SK-N-SH (cell line): ENCODE measurements at regions of chr10 and their contacts with region 1.

Region 1: DNA sequence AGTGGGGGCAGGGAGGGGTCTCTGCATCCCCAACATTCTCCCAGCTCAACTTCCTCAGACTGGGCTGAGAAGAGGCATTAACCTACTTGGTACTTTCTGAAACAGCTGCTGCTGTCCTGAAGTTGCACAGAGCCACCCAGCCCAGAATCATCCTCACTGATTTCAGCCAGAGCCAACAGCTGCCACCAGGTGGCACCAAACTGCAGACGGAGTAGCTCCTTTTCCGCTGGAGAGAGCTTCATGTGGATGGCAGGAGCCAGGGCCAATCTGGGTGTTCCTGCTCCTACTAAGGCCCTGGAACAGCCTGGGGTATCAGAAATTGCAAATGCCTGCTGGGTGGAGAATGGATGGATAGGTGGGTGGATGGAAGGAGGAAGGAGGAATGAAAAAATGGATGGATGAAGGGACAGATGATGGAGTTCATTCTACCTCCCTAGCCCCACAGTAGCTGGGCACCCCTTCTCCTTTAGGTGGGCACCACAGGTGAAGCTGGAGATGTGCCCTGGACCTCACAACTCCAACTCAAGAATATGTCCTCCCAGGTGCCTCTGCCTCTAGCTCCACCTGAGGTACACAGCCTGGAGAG is 11.8 kb upstream of the DRGX start:
- DNase-seq: peak; percentile 83
- H3K4me3 ChIP-seq: no peak overlapping the region; a peak in 1 of 4 replicates
- H3K27ac ChIP-seq: no peak overlapping the region
- H3K4me1 ChIP-seq: peaks cover 0 to 32% of the 10 kb centered on the region in 2 experiments; a peak in 2 of 4 replicates
- H3K27me3 ChIP-seq: peaks cover 21% of the 10 kb centered on the region; the same call in 1 of the 2 replicates
- CTCF ChIP-seq: peak; percentile 89
- EP300 ChIP-seq: no peak
- RAD21 ChIP-seq: peak; percentile 92

Region 2: GRCh38 chr10:48981310-48981907 is 426.2 kb before region 1 on chr10:
- CTCF ChIA-PET with region 1: interaction called, 10 read pairs
- POLR2A ChIA-PET with region 1: no interaction called
- DNase-seq: peak; percentile 85
- H3K4me3 ChIP-seq: peak overlapping the region in 1 of 2 experiments; percentile 42; a peak in 1 of 4 replicates
- H3K27ac ChIP-seq: no peak overlapping the region
- H3K4me1 ChIP-seq: no peaks in the 10 kb centered on the region; a peak in 1 of 4 replicates
- H3K27me3 ChIP-seq: no peaks in the 10 kb centered on the region
- CTCF ChIP-seq: peak; percentile 57
- EP300 ChIP-seq: no peak
- RAD21 ChIP-seq: peak; percentile 89

Region 3: GRCh38 chr10:49353026-49353894 is 54.4 kb before region 1 on chr10:
- CTCF ChIA-PET with region 1: no interaction called
- POLR2A ChIA-PET with region 1: no interaction called
- DNase-seq: no peak
- H3K4me3 ChIP-seq: no peak overlapping the region
- H3K27ac ChIP-seq: no peak overlapping the region
- H3K4me1 ChIP-seq: no peaks in the 10 kb centered on the region; a peak in 1 of 4 replicates
- H3K27me3 ChIP-seq: no peaks in the 10 kb centered on the region
- CTCF ChIP-seq: no peak
- EP300 ChIP-seq: no peak
- RAD21 ChIP-seq: no peak

Region 4: DNA sequence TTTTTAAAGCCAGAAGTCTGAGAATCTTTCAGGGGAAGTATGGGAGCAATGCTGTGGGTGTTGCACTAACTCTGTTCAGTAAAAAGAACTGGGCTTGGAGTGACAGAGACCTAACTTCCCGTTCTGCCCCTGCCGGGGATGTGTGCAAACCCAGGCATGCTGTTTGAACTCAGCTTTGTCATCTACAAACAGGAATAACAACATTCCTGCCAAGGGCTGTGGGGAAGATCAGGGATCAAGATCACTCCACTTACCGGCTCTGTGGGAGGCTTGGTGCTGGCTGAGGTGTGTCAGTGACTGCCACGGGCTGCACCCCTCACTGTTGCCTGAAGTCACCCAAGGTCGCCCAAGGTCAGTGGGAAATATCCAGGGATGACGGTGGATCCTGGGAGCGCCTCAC is 11.4 kb after region 1 on chr10:
- CTCF ChIA-PET with region 1: interaction called, 29 read pairs
- POLR2A ChIA-PET with region 1: no interaction called
- DNase-seq: no peak
- H3K4me3 ChIP-seq: no peak overlapping the region
- H3K27ac ChIP-seq: no peak overlapping the region
- H3K4me1 ChIP-seq: no peaks in the 10 kb centered on the region
- H3K27me3 ChIP-seq: no peaks in the 10 kb centered on the region; the same call in 1 of the 2 replicates
- CTCF ChIP-seq: no peak
- EP300 ChIP-seq: no peak
- RAD21 ChIP-seq: no peak

Region 5: GRCh38 chr10:49478819-49479218 is 71.2 kb after region 1 on chr10:
- CTCF ChIA-PET with region 1: interaction called, 13 read pairs
- POLR2A ChIA-PET with region 1: no interaction called
- DNase-seq: no peak
- H3K4me3 ChIP-seq: no peak overlapping the region
- H3K27ac ChIP-seq: no peak overlapping the region
- H3K4me1 ChIP-seq: no peaks in the 10 kb centered on the region; a peak in 2 of 4 replicates
- H3K27me3 ChIP-seq: no peaks in the 10 kb centered on the region
- CTCF ChIP-seq: no peak
- EP300 ChIP-seq: no peak
- RAD21 ChIP-seq: no peak

Region 6: GRCh38 chr10:49488056-49488717 is 80.5 kb after region 1 on chr10:
- CTCF ChIA-PET with region 1: interaction called, 12 read pairs
- POLR2A ChIA-PET with region 1: no interaction called
- DNase-seq: peak; percentile 70
- H3K4me3 ChIP-seq: no peak overlapping the region
- H3K27ac ChIP-seq: peak overlapping the region in 1 of 2 experiments; percentile 86; a peak in 2 of 4 replicates
- H3K4me1 ChIP-seq: peaks cover 11% of the 10 kb centered on the region in 2 experiments; a peak in 3 of 4 replicates
- H3K27me3 ChIP-seq: no peaks in the 10 kb centered on the region
- CTCF ChIP-seq: no peak
- EP300 ChIP-seq: peak in 1 of 2 experiments; percentile 76; a peak in 1 of 4 replicates
- RAD21 ChIP-seq: no peak

Region 7: DNA sequence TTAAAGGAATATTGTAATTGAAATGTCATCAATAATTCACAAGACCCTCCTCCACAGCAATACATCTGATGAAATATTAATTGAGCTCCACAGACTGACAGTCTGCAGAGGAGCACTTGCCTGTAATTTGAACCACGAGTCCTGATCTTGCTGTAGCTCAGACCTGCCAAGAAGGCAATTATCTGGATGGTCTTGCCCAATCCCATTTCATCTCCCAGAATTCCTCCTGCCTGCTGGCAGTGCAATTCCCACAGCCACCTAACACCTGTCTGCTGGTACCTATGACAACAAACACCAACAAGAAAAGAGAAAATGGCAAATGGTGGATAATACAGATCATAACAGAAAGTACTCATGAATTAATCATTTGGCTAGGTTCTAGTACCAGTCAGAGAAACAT is 92.8 kb after region 1 on chr10:
- CTCF ChIA-PET with region 1: interaction called, 30 read pairs
- POLR2A ChIA-PET with region 1: interaction called, 3 read pairs
- DNase-seq: no peak
- H3K4me3 ChIP-seq: no peak overlapping the region
- H3K27ac ChIP-seq: no peak overlapping the region
- H3K4me1 ChIP-seq: peaks cover 0 to 15% of the 10 kb centered on the region in 2 experiments; a peak in 2 of 4 replicates
- H3K27me3 ChIP-seq: no peaks in the 10 kb centered on the region
- CTCF ChIP-seq: no peak
- EP300 ChIP-seq: no peak
- RAD21 ChIP-seq: no peak

Region 8: DNA sequence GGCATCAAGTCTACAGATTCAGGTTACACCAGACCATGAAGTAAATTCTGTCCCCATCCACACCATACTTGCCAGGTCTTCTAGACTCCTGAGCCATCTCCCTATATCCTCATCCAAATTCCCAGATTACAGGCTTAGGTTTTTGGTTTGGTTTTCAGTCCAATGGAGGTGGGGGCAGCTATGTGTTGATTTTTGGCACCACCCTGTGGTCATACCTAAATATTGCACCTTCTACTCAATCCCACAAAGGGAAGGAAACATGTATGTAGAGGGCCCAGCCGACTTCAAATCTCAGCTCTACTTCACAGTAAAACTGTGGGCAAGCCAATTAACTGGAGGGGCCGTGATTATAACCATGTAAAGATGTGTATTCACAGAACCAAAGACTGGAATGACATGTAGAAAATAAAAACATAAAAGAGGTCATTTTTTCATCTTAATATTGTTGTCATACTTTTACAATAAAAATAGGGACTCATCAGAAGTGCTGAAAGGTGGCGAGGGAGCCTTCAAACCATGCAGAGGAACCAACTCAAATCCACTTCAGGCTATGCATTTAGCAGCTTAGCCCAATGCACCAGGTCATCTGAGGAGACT is 111.4 kb after region 1 on chr10:
- CTCF ChIA-PET with region 1: interaction called, 425 read pairs
- POLR2A ChIA-PET with region 1: no interaction called
- DNase-seq: peak; percentile 67
- H3K4me3 ChIP-seq: no peak overlapping the region; a peak in 1 of 4 replicates
- H3K27ac ChIP-seq: no peak overlapping the region
- H3K4me1 ChIP-seq: no peaks in the 10 kb centered on the region; a peak in 1 of 4 replicates
- H3K27me3 ChIP-seq: no peaks in the 10 kb centered on the region
- CTCF ChIP-seq: peak; percentile 77
- EP300 ChIP-seq: no peak
- RAD21 ChIP-seq: peak; percentile 87

Region 9: GRCh38 chr10:49798275-49798674 is 390.6 kb after region 1 on chr10:
- CTCF ChIA-PET with region 1: no interaction called
- POLR2A ChIA-PET with region 1: no interaction called
- DNase-seq: no peak
- H3K4me3 ChIP-seq: no peak overlapping the region
- H3K27ac ChIP-seq: no peak overlapping the region
- H3K4me1 ChIP-seq: no peaks in the 10 kb centered on the region
- H3K27me3 ChIP-seq: no peaks in the 10 kb centered on the region
- CTCF ChIP-seq: no peak
- EP300 ChIP-seq: no peak
- RAD21 ChIP-seq: no peak

Region 10: GRCh38 chr10:50224330-50224952 is 816.8 kb after region 1 on chr10:
- CTCF ChIA-PET with region 1: no interaction called
- POLR2A ChIA-PET with region 1: no interaction called
- DNase-seq: peak; percentile 28
- H3K4me3 ChIP-seq: no peak overlapping the region; a peak in 1 of 4 replicates
- H3K27ac ChIP-seq: no peak overlapping the region
- H3K4me1 ChIP-seq: no peaks in the 10 kb centered on the region
- H3K27me3 ChIP-seq: peaks cover 11% of the 10 kb centered on the region; the same call in 1 of the 2 replicates
- CTCF ChIP-seq: peak; percentile 72
- EP300 ChIP-seq: no peak
- RAD21 ChIP-seq: peak; percentile 82